ENCODE measurements at regions of chr2 and their contacts with region 1.

Region 1: GRCh38 chr2:32502941-32503340 is 124.9 kb upstream of the TTC27 start:
- DNase-seq: no peak
- ATAC-seq: no peak
- H3K4me3 ChIP-seq: no peak overlapping the region
- H3K4me3 Mint-ChIP-seq: no peak overlapping the region
- H3K27ac ChIP-seq: no peak overlapping the region
- H3K27ac Mint-ChIP-seq: no peak overlapping the region
- H3K4me1 ChIP-seq: no peaks in the 10 kb centered on the region
- H3K4me1 Mint-ChIP-seq: peaks cover 0 to 5% (median 0%) of the 10 kb centered on the region in 3 donors
- H3K27me3 ChIP-seq: no peaks in the 10 kb centered on the region
- H3K27me3 Mint-ChIP-seq: no peaks in the 10 kb centered on the region

Region 2: GRCh38 chr2:32436150-32436549 is 66.8 kb before region 1 on chr2:
- CTCF ChIA-PET with region 1: no interaction called
- POLR2A ChIA-PET with region 1: no interaction called
- DNase-seq: no peak
- ATAC-seq: no peak
- H3K4me3 ChIP-seq: no peak overlapping the region
- H3K4me3 Mint-ChIP-seq: no peak overlapping the region
- H3K27ac ChIP-seq: no peak overlapping the region
- H3K27ac Mint-ChIP-seq: no peak overlapping the region
- H3K4me1 ChIP-seq: no peaks in the 10 kb centered on the region
- H3K4me1 Mint-ChIP-seq: peaks cover 0 to 8% (median 3%) of the 10 kb centered on the region in 3 donors
- H3K27me3 ChIP-seq: no peaks in the 10 kb centered on the region
- H3K27me3 Mint-ChIP-seq: no peaks in the 10 kb centered on the region

Region 3: GRCh38 chr2:32453242-32454062 is 49.5 kb before region 1 on chr2:
- CTCF ChIA-PET with region 1: no interaction called
- POLR2A ChIA-PET with region 1: interaction called in 1 of 2 experiments, 10 read pairs
- DNase-seq: no peak
- ATAC-seq: no peak
- H3K4me3 ChIP-seq: no peak overlapping the region
- H3K4me3 Mint-ChIP-seq: no peak overlapping the region
- H3K27ac ChIP-seq: no peak overlapping the region
- H3K27ac Mint-ChIP-seq: peak overlapping the region; percentile 12 to 45
- H3K4me1 ChIP-seq: no peaks in the 10 kb centered on the region
- H3K4me1 Mint-ChIP-seq: peaks cover 0 to 21% (median 16%) of the 10 kb centered on the region in 3 donors
- H3K27me3 ChIP-seq: no peaks in the 10 kb centered on the region
- H3K27me3 Mint-ChIP-seq: no peaks in the 10 kb centered on the region